HCT116 (cell line): ENCODE measurements at regions of chr6 and their contacts with region 1.

Region 1: GRCh38 chr6:113879186-113880096 is 22.3 kb downstream of the MARCKS start:
- DNase-seq: peak; percentile 68
- ATAC-seq: peak; percentile 100
- H3K4me3 ChIP-seq: no peak overlapping the region
- H3K27ac ChIP-seq: no peak overlapping the region
- H3K4me1 ChIP-seq: peaks cover 0 to 7% of the 10 kb centered on the region in 2 experiments; a peak in 3 of 4 replicates
- H3K27me3 ChIP-seq: no peaks in the 10 kb centered on the region
- CTCF ChIP-seq: peak; percentile 42 to 81 (median 71); a peak in 5 of 6 replicates
- POLR2A ChIP-seq: no peak
- RAD21 ChIP-seq: peak; percentile 88

Region 2: DNA sequence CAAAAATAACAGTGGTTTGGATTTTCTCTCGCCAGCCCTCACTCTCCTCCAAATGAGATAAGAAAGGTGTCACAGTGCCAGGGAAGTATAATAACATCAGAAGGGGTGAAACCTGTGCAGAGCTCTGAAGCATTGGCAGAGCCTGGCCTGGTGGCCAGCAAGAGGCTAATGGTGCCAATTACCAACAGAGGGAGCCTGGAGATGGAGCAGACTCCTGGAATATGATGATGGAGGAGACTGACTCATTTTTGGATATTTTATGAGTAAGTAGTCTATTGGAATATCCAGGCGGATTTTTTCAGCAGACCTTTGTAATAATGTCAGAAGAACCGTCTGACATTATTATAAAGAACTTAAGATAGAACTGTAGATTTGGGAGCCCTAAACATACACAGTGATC is 464.9 kb before region 1 on chr6:
- CTCF ChIA-PET with region 1: no interaction called
- POLR2A ChIA-PET with region 1: no interaction called
- RAD21 ChIA-PET with region 1: no interaction called
- intact Hi-C with region 1: loop called (anchors 5 kb)
- DNase-seq: peak; percentile 57
- ATAC-seq: peak; percentile 100
- H3K4me3 ChIP-seq: no peak overlapping the region
- H3K27ac ChIP-seq: no peak overlapping the region
- H3K4me1 ChIP-seq: peaks cover 6 to 29% of the 10 kb centered on the region in 2 experiments; a peak in 3 of 4 replicates
- H3K27me3 ChIP-seq: no peaks in the 10 kb centered on the region
- CTCF ChIP-seq: peak; percentile 50 to 66 (median 61); a peak in 5 of 6 replicates
- POLR2A ChIP-seq: no peak
- RAD21 ChIP-seq: peak; percentile 74

Region 3: DNA sequence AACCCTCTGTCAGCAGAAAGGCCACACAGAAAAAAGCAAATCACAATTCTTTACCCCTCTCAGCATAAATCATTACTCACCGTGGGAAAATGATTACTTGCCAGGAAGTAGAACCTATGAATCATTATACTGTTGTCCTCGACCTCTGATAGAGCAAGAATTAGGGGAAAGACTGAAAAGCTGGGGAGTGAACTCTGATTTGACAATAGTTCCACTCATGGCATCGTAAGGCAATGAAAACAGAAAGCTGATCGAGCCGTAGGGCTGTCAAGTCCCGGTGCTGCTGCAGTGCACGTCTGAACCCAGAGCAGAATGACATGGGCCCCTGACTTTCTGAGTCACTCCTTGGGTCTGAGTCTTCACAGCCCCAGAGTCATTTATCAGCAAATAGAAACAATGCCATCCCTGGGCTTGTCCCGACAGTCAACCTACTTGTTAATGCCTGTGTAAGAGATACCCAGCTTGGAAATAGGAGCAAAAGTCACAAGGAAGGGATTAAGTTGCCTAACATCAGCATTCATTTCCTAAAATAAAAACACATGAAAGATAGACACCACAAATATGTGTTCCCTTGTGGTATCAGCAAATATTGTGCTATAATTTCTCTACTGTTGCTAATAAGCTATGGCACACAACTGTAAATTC is 247.1 kb before region 1 on chr6:
- CTCF ChIA-PET with region 1: no interaction called
- POLR2A ChIA-PET with region 1: no interaction called
- RAD21 ChIA-PET with region 1: no interaction called
- intact Hi-C with region 1: no loop called
- DNase-seq: peak; percentile 65
- ATAC-seq: peak; percentile 85
- H3K4me3 ChIP-seq: peak overlapping the region; percentile 24 to 47
- H3K27ac ChIP-seq: peak overlapping the region; percentile 1; the same call in 1 of the 2 replicates
- H3K4me1 ChIP-seq: peaks cover 11 to 27% of the 10 kb centered on the region in 2 experiments
- H3K27me3 ChIP-seq: no peaks in the 10 kb centered on the region
- CTCF ChIP-seq: no peak
- POLR2A ChIP-seq: no peak
- RAD21 ChIP-seq: 0 out of 2 replicates have a peak, but pooled peaks have one; percentile 13